CD14-positive monocyte (primary cell): ENCODE measurements at regions of chr10 and their contacts with region 1.

Region 1: DNA sequence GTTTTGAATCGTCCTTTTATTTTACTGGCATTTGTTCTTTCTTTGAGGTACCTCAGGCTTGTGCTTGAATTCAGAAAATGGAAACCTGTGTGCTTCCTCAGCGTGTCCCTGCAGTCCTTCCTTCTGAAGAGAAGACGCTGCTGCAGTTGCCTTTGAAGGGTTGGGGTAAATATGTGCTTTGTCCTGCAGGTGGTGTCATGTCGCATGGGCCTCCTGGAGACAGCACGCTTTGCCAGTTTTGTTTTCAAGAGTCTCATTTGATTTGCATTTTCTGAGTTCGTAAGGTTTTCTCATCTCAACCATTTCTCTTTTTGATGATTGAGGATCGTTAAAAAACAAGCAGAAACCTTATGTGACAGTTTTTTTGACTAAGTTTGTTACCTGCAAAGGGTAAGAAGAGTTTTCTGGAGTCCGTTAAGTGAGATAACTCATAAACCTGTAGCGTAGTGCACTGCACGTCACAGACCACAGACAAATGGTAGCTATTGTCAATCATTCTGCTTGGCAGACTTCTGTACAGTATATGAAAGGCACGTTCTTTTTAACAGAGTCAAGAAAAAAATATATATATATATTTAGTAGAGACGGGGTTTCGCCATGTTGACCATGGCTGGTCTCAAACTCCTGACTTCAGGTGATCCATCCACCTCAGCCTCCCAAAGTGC is 57.0 kb downstream of the CDC123 start:
- DNase-seq: peak in 1 of 3 donors; percentile 10
- H3K4me3 ChIP-seq: no peak overlapping the region
- H3K4me3 Mint-ChIP-seq: no peak overlapping the region
- H3K27ac ChIP-seq: no peak overlapping the region
- H3K27ac Mint-ChIP-seq: peak overlapping the region in 1 of 7 donors; percentile 54
- H3K4me1 ChIP-seq: no peaks in the 10 kb centered on the region
- H3K4me1 Mint-ChIP-seq: no peaks in the 10 kb centered on the region
- H3K27me3 ChIP-seq: no peaks in the 10 kb centered on the region
- H3K27me3 Mint-ChIP-seq: peaks cover 2% of the 10 kb centered on the region in 3 donors
- CTCF ChIP-seq: peak; percentile 33

Region 2: DNA sequence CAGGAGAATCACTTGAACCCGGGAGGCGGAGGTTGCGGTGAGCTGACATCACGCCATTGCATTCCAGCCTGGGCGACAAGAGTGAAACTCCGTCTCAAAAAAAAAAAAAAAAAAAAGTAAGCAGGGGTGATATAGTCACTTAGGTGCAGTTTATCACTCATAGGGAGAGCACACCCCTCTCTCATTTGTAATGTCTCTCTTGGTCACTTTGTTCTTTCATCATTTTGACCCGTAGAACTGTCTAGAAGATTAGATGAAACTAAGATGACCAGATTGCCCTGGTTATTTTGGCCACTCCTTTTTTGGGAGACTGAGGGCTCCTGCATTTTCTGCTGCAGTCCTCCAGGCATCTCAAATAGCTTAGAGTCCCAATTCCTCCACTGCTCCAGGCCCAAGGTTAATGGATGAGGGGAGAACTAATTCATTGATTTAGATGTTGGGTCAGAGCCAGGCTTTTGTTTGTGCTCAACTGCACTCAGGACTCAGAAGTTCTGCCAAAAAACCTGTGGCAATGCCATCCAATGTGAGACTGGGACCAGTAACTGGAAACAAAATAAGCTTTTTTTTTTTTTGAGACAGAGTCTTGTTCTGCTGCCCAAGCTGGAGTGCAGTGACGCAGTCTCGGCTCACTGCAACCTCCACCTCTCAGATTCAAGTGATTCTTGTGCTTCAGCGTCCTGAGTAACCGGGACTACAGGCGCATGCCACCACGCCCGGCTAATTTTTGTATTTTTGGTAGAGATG is 46.4 kb after region 1 on chr10:
- intact Hi-C with region 1: no loop called
- DNase-seq: no peak
- H3K4me3 ChIP-seq: no peak overlapping the region
- H3K4me3 Mint-ChIP-seq: no peak overlapping the region
- H3K27ac ChIP-seq: no peak overlapping the region
- H3K27ac Mint-ChIP-seq: no peak overlapping the region
- H3K4me1 ChIP-seq: no peaks in the 10 kb centered on the region
- H3K4me1 Mint-ChIP-seq: no peaks in the 10 kb centered on the region
- H3K27me3 ChIP-seq: no peaks in the 10 kb centered on the region
- H3K27me3 Mint-ChIP-seq: peaks cover 2 to 3% (median 3%) of the 10 kb centered on the region in 3 donors
- CTCF ChIP-seq: no peak

Region 3: GRCh38 chr10:12656518-12657142 is 403.6 kb after region 1 on chr10:
- intact Hi-C with region 1: loop called in 1 of 2 experiments (anchors 10 kb)
- DNase-seq: peak; percentile 15 to 36 (median 30)
- H3K4me3 ChIP-seq: no peak overlapping the region
- H3K4me3 Mint-ChIP-seq: no peak overlapping the region
- H3K27ac ChIP-seq: no peak overlapping the region
- H3K27ac Mint-ChIP-seq: no peak overlapping the region
- H3K4me1 ChIP-seq: no peaks in the 10 kb centered on the region
- H3K4me1 Mint-ChIP-seq: no peaks in the 10 kb centered on the region
- H3K27me3 ChIP-seq: no peaks in the 10 kb centered on the region
- H3K27me3 Mint-ChIP-seq: no peaks in the 10 kb centered on the region
- CTCF ChIP-seq: peak; percentile 71